ENCODE measurements at regions of chr16 and their contacts with region 1.

Region 1: GRCh38 chr16:22675745-22676540 is 138.0 kb upstream of the HS3ST2 start:
- DNase-seq: no peak
- CTCF ChIP-seq: no peak

Region 2: GRCh38 chr16:21554795-21555585 is 1121.0 kb before region 1 on chr16:
- CTCF ChIA-PET with region 1: no interaction called
- POLR2A ChIA-PET with region 1: interaction called, 11 read pairs
- DNase-seq: peak; percentile 96
- CTCF ChIP-seq: peak; percentile 100

Region 3: GRCh38 chr16:21713549-21714368 is 962.2 kb before region 1 on chr16:
- CTCF ChIA-PET with region 1: no interaction called
- POLR2A ChIA-PET with region 1: no interaction called
- DNase-seq: no peak
- CTCF ChIP-seq: no peak

Region 4: DNA sequence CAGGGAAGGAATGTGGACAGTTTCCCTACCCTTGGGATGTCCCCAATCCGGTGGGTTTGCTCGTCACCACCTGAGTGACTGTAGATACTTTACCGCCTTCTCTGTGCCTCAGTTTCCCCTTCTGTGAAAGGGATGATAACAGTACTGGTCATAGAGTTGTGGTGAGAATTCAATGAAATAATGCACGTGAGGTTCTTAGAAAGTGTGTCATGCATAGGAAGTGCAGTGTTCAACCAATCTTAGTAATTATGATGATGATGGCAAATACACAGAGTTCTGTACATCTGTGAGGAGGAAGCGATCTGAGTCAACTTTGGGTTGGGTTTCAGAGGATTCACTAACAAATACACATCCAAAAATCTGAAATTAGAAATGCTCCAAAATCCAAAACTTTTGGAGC is 23.4 kb after region 1 on chr16:
- CTCF ChIA-PET with region 1: no interaction called
- POLR2A ChIA-PET with region 1: no interaction called
- DNase-seq: no peak
- CTCF ChIP-seq: no peak